Activated T-helper 1 cell treated with anti-CD3 and anti-CD28 coated beads, Interleukin-12 subunit alpha, Interleukin-12 subunit beta, Interleukin-2, Interleukin-4 antibody, amounts not matched to agents 30 ng/mL and 10 ng/mL and 1 ng/mL, durations not matched to agents 14 hours and 24 hours and 36 hours (primary cell): ENCODE measurements at regions of chr6 and their contacts with region 1.

Region 1: DNA sequence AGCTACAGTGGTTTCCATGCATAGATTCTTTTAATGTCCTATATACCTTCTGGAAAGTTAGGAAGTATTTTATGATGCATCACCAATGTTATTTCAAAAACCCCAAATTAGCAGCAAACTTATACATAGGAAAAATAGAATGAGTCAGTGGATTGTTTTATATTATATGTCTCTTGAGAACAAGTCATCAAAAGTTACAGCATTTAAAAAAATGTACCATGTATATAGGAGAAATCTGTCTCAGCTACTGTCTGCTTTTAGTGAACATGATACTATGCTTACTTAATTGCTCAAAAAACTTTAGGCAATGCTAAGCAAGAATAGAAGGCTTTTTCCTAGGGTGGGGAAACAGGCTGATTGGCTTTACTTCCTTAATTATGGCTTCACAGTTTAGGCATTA is 365.3 kb downstream of the SAMD5 start:
- DNase-seq: no peak
- H3K4me3 Mint-ChIP-seq: no peak overlapping the region
- H3K27ac Mint-ChIP-seq: no peak overlapping the region
- H3K4me1 Mint-ChIP-seq: no peaks in the 10 kb centered on the region
- H3K27me3 Mint-ChIP-seq: no peaks in the 10 kb centered on the region

Region 2: GRCh38 chr6:146265056-146265455 is 1608.8 kb before region 1 on chr6:
- intact Hi-C with region 1: no loop called
- DNase-seq: no peak
- H3K4me3 Mint-ChIP-seq: no peak overlapping the region
- H3K27ac Mint-ChIP-seq: no peak overlapping the region
- H3K4me1 Mint-ChIP-seq: no peaks in the 10 kb centered on the region
- H3K27me3 Mint-ChIP-seq: no peaks in the 10 kb centered on the region

Region 3: DNA sequence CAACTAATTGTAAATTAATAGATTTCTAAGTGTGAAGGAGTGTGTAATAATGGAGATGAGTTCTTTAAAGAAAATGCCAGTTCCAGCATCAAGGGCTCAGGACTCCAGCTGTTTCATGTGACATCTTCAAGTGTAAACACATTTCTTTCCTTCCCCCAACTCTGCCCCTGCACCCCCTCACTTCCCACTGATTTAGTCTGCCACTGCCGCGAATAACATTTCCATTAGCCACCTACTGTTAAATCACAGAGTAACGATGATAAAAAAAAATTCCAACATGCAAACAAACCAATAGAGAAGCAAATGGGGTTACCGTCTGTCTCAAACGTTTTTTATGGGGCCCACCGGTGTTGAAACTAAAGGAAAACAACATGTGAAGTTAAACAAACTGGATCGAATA is 49.0 kb after region 1 on chr6:
- intact Hi-C with region 1: loop called (anchors 1 kb)
- DNase-seq: no peak
- H3K4me3 Mint-ChIP-seq: no peak overlapping the region
- H3K27ac Mint-ChIP-seq: no peak overlapping the region
- H3K4me1 Mint-ChIP-seq: no peaks in the 10 kb centered on the region
- H3K27me3 Mint-ChIP-seq: no peaks in the 10 kb centered on the region